Caco-2 (cell line): ENCODE measurements at regions of chr16 and their contacts with region 1.

Region 1: DNA sequence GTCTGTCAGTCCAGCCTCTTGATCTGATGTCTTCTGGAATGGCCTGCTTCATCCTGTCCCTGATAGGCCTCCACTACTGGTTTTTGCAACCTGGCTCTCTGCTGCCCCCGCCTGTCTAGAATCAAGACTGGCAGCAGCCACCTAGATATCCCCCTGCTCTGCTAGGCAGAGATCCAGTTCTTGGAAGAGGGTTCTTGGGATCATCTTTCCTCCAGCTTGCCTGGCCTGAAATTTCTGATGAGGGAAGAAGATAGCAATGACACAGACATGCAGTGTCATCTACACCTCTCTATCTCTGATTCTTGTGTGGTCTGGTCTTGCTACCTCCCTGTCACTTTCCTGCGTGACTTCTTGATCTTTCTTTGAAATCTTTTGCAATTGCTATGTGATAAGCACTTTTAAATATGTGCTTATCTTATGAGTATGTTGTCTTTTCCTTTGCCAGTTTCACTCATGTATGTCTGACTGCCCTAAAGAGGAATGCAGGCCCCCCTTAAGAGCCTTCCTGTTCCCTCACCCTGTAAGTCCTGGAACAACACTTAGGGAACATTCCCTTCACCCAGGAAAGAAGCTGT is 20.3 kb upstream of the NFATC3 start:
- DNase-seq: peak; percentile 90 to 91
- H3K4me3 ChIP-seq: no peak overlapping the region
- H3K4me3 Mint-ChIP-seq: peak overlapping the region; percentile 21
- H3K27ac Mint-ChIP-seq: peak overlapping the region; percentile 49
- H3K4me1 ChIP-seq: peaks cover 22% of the 10 kb centered on the region
- H3K4me1 Mint-ChIP-seq: peaks cover 25% of the 10 kb centered on the region
- H3K27me3 ChIP-seq: no peaks in the 10 kb centered on the region
- H3K27me3 Mint-ChIP-seq: no peaks in the 10 kb centered on the region
- CTCF ChIP-seq: peak; percentile 91 to 96

Region 2: DNA sequence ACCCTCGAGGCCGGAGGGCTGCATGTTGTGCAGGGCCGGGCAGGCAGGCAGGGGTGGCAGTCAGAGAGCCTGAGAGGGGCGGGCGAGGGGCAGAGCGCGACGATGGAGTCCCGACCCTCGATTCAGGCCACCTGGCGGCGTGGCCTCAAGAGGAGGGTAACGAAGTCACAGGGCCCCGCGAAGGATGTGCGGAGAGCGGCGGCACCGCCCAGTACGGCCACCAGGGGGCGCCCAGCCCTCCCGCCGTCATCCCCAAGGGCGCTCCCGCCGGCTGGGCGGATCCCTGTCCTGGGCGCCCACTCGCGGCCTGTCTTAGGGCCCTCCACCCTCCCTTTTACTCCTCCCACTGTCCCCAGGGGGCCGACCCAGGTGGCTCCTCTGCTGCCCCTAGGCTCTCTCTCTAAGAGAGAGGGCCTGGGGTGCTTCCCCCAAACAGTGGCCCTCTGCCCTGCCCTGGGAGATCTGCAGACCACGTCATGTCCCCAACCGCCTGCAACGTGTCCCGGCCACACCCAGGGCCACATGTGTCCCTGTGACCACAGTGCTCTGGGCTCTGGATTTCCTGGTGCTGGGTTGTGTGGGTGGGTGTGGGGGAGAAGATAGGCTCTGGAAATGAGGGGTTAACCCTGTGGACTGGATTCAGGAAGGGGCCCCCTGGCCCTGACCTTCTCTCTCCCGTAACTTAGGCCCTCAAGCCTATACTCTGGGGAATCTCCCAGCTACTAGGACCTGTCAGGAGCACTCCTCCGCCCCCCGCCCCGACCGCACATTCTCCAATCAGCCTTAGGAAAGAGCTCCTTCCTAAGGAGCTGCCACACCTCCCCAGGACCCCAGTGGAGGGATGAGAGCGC is 71.5 kb before region 1 on chr16:
- CTCF ChIA-PET with region 1: interaction called, 5 read pairs
- POLR2A ChIA-PET with region 1: no interaction called
- intact Hi-C with region 1: loop called (anchors 1 kb)
- DNase-seq: peak; percentile 80 to 86
- H3K4me3 ChIP-seq: no peak overlapping the region
- H3K4me3 Mint-ChIP-seq: peak overlapping the region; percentile 37
- H3K27ac Mint-ChIP-seq: no peak overlapping the region
- H3K4me1 ChIP-seq: peaks cover 7% of the 10 kb centered on the region
- H3K4me1 Mint-ChIP-seq: no peaks in the 10 kb centered on the region
- H3K27me3 ChIP-seq: no peaks in the 10 kb centered on the region
- H3K27me3 Mint-ChIP-seq: no peaks in the 10 kb centered on the region
- CTCF ChIP-seq: peak; percentile 95

Region 3: GRCh38 chr16:68022704-68023522 is 42.0 kb before region 1 on chr16 and contains the starts of genes DDX28 and DUS2:
- CTCF ChIA-PET with region 1: no interaction called
- POLR2A ChIA-PET with region 1: interaction called, 3 read pairs
- intact Hi-C with region 1: loop called (anchors 1 kb)
- DNase-seq: peak; percentile 94 to 96
- H3K4me3 ChIP-seq: peak within 1 kb of the TSS; percentile 89
- H3K4me3 Mint-ChIP-seq: peak within 1 kb of the TSS; percentile 83
- H3K27ac Mint-ChIP-seq: peak within 1 kb of the TSS; percentile 90
- H3K4me1 ChIP-seq: no peaks in the 10 kb centered on the region; the same call in 1 of the 2 replicates
- H3K4me1 Mint-ChIP-seq: peaks cover 8% of the 10 kb centered on the region
- H3K27me3 ChIP-seq: no peaks in the 10 kb centered on the region
- H3K27me3 Mint-ChIP-seq: no peaks in the 10 kb centered on the region
- CTCF ChIP-seq: no peak
- total RNA-seq, gene DDX28: 15.9 and 17.1 TPM in 2 replicates
- total RNA-seq, gene DUS2: 33.6 and 37.4 TPM in 2 replicates

Region 4: GRCh38 chr16:68040507-68041288 is 24.2 kb before region 1 on chr16:
- CTCF ChIA-PET with region 1: interaction called, 3 read pairs
- POLR2A ChIA-PET with region 1: no interaction called
- intact Hi-C with region 1: loop called (anchors 2 kb)
- DNase-seq: peak; percentile 86 to 92
- H3K4me3 ChIP-seq: no peak overlapping the region
- H3K4me3 Mint-ChIP-seq: no peak overlapping the region
- H3K27ac Mint-ChIP-seq: no peak overlapping the region
- H3K4me1 ChIP-seq: no peaks in the 10 kb centered on the region
- H3K4me1 Mint-ChIP-seq: no peaks in the 10 kb centered on the region
- H3K27me3 ChIP-seq: no peaks in the 10 kb centered on the region
- H3K27me3 Mint-ChIP-seq: no peaks in the 10 kb centered on the region
- CTCF ChIP-seq: peak; percentile 92 to 95

Region 5: GRCh38 chr16:68085259-68086071 is 20.6 kb after region 1 on chr16 and contains the start of gene NFATC3:
- CTCF ChIA-PET with region 1: interaction called, 26 read pairs
- POLR2A ChIA-PET with region 1: interaction called, 24 read pairs
- intact Hi-C with region 1: loop called (anchors 1 kb)
- DNase-seq: peak; percentile 99
- H3K4me3 ChIP-seq: peak within 1 kb of the TSS; percentile 87
- H3K4me3 Mint-ChIP-seq: peak within 1 kb of the TSS; percentile 71
- H3K27ac Mint-ChIP-seq: peak within 1 kb of the TSS; percentile 83
- H3K4me1 ChIP-seq: peaks cover 28% of the 10 kb centered on the region
- H3K4me1 Mint-ChIP-seq: peaks cover 38% of the 10 kb centered on the region
- H3K27me3 ChIP-seq: no peaks in the 10 kb centered on the region
- H3K27me3 Mint-ChIP-seq: no peaks in the 10 kb centered on the region
- CTCF ChIP-seq: no peak
- total RNA-seq, gene NFATC3: 40.0 and 43.9 TPM in 2 replicates

Region 6: DNA sequence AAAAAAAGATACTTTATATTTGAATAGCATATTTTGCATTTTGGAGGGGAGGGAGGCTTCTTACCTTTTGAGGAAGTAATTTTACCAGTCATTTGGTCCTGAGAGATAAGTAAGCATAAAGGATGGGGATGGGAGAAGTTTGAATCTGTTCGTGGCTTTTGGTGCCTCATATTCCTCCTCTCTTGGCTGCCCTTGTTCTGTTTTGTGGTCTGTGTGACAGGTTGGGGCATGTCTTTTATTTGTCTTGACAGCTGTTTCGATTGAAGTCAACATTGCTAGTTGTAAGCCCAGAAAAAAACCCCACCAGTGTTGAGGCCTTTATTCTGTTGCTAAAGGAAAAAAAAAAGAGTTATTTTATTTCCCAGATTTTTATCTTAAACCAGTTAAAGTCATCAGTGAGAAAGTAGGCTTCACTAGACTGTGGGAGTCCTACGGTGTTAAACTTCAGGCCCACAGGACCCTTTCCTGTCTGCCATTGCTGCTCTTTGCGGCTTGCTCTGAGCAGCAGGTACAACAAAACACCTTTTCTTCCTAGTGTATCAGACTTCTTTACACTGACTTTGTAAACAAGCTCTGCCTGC is 210.8 kb after region 1 on chr16:
- CTCF ChIA-PET with region 1: no interaction called
- POLR2A ChIA-PET with region 1: no interaction called
- intact Hi-C with region 1: no loop called
- DNase-seq: no peak
- H3K4me3 ChIP-seq: no peak overlapping the region
- H3K4me3 Mint-ChIP-seq: no peak overlapping the region
- H3K27ac Mint-ChIP-seq: peak overlapping the region; percentile 21
- H3K4me1 ChIP-seq: peaks cover 53% of the 10 kb centered on the region
- H3K4me1 Mint-ChIP-seq: peaks cover 23% of the 10 kb centered on the region
- H3K27me3 ChIP-seq: no peaks in the 10 kb centered on the region
- H3K27me3 Mint-ChIP-seq: no peaks in the 10 kb centered on the region
- CTCF ChIP-seq: no peak